ENCODE measurements at regions of chr21 and their contacts with region 1.

Region 1: GRCh38 chr21:42661688-42662481 is 8.5 kb downstream of the PDE9A start:
- DNase-seq: no peak
- H3K4me3 ChIP-seq: no peak overlapping the region
- H3K4me3 Mint-ChIP-seq: no peak overlapping the region
- H3K27ac ChIP-seq: no peak overlapping the region
- H3K27ac Mint-ChIP-seq: no peak overlapping the region
- H3K4me1 ChIP-seq: no peaks in the 10 kb centered on the region
- H3K4me1 Mint-ChIP-seq: peaks cover 0 to 1% (median 0%) of the 10 kb centered on the region in 4 donors
- H3K27me3 ChIP-seq: no peaks in the 10 kb centered on the region
- H3K27me3 Mint-ChIP-seq: no peaks in the 10 kb centered on the region

Region 2: GRCh38 chr21:41921021-41921420 is 740.9 kb before region 1 on chr21:
- CTCF ChIA-PET with region 1: no interaction called
- POLR2A ChIA-PET with region 1: no interaction called
- intact Hi-C with region 1: no loop called
- DNase-seq: no peak
- H3K4me3 ChIP-seq: no peak overlapping the region
- H3K4me3 Mint-ChIP-seq: no peak overlapping the region
- H3K27ac ChIP-seq: no peak overlapping the region
- H3K27ac Mint-ChIP-seq: no peak overlapping the region
- H3K4me1 ChIP-seq: peaks cover 28% of the 10 kb centered on the region
- H3K4me1 Mint-ChIP-seq: peaks cover 21 to 30% (median 26%) of the 10 kb centered on the region in 4 donors
- H3K27me3 ChIP-seq: no peaks in the 10 kb centered on the region
- H3K27me3 Mint-ChIP-seq: no peaks in the 10 kb centered on the region

Region 3: DNA sequence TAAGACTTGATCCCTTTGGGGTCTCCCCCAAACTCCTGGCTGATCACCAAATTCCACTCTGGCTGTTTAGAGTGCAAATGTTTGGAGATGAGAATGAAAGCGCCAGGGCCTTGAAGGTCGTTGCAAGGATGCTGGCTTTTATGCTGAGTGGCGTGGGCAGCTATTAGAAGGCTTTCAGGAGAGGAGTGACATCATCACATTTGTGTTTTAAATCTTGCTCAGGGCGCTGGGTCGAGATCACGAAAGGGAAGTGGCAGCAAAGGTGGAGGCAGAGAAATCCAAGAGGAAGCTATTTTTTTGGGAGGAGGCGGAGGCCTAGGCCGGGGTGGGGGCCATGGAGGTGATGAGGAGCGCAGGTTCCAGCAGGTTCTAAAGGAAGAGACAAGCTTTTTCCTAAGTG is 40.8 kb after region 1 on chr21:
- CTCF ChIA-PET with region 1: no interaction called
- POLR2A ChIA-PET with region 1: no interaction called
- intact Hi-C with region 1: loop called (anchors 1 kb)
- DNase-seq: no peak
- H3K4me3 ChIP-seq: no peak overlapping the region
- H3K4me3 Mint-ChIP-seq: no peak overlapping the region
- H3K27ac ChIP-seq: no peak overlapping the region
- H3K27ac Mint-ChIP-seq: no peak overlapping the region
- H3K4me1 ChIP-seq: no peaks in the 10 kb centered on the region
- H3K4me1 Mint-ChIP-seq: peaks cover 0 to 2% (median 0%) of the 10 kb centered on the region in 4 donors
- H3K27me3 ChIP-seq: no peaks in the 10 kb centered on the region
- H3K27me3 Mint-ChIP-seq: peaks cover 0 to 2% of the 10 kb centered on the region in 2 donors